ENCODE measurements at regions of chr4 and their contacts with region 1.

Region 1: GRCh38 chr4:47510506-47511143 is 25.6 kb downstream of the ATP10D start:
- DNase-seq: peak; percentile 90
- ATAC-seq: peak; percentile 94
- H3K4me3 ChIP-seq: peak overlapping the region; percentile 35; the same call in 1 of the 2 replicates
- H3K27ac ChIP-seq: peak overlapping the region; percentile 84
- H3K4me1 ChIP-seq: peaks cover 12% of the 10 kb centered on the region
- H3K27me3 ChIP-seq: no peaks in the 10 kb centered on the region
- CTCF ChIP-seq: peak in 2 of 3 experiments; percentile 2 to 42; a peak in 2 of 6 replicates
- EP300 ChIP-seq: peak; percentile 95 to 96
- POLR2A ChIP-seq: no peak
- RAD21 ChIP-seq: 0 out of 2 replicates have a peak, but pooled peaks have one; percentile 22

Region 2: GRCh38 chr4:47122592-47123291 is 387.9 kb before region 1 on chr4:
- CTCF ChIA-PET with region 1: no interaction called
- POLR2A ChIA-PET with region 1: no interaction called
- RAD21 ChIA-PET with region 1: no interaction called
- SMC1A ChIA-PET with region 1: no interaction called
- in situ Hi-C with region 1: no loop called
- intact Hi-C with region 1: no loop called
- DNase-seq: peak; percentile 21
- ATAC-seq: peak; percentile 94
- H3K4me3 ChIP-seq: no peak overlapping the region
- H3K27ac ChIP-seq: no peak overlapping the region
- H3K4me1 ChIP-seq: no peaks in the 10 kb centered on the region
- H3K27me3 ChIP-seq: no peaks in the 10 kb centered on the region
- CTCF ChIP-seq: peak; percentile 84 to 91 (median 90)
- EP300 ChIP-seq: 0 out of 4 replicates have a peak, but pooled peaks of 1 of the 2 experiments have one; percentile 24
- POLR2A ChIP-seq: no peak
- RAD21 ChIP-seq: peak; percentile 83

Region 3: DNA sequence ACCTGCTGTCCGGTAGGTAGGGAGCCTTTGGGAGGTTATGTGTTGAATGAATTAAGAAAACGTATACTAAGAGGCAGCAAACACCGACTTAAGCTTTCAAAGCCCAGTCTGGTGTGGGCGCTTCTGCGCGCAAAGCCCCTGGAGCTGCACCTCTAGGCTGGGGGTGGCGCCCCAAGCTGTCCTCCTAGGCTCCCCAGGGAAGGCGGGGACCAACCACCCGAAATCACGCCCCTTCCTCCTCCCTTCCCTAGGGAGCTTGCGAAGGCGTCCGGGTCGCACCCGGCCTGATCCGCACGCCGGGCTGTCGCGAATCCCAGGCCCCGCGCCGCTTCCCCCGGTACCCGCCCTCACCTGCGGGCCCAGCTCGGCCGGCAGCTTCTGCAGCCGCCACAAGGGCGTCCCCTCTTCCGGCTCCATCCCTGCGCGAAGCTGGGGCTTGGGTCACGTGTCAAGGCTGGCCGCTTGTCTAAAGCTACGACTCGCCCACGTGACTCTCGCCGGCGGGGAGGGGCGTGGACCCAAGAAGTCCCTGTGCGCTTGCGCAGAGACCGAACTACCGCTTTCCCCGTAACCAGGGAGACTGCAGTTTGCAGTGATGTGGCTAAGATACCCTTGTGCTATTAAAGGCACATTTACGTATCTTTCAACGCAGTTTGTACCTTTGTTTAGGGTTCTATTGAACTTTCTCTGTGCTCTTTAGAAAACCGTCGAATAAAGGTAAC is 47.2 kb before region 1 on chr4 and contains the start of gene COMMD8:
- CTCF ChIA-PET with region 1: interaction called, 9 read pairs
- POLR2A ChIA-PET with region 1: interaction called, 3 read pairs
- RAD21 ChIA-PET with region 1: interaction called, 10 read pairs
- SMC1A ChIA-PET with region 1: interaction called, 16 read pairs
- in situ Hi-C with region 1: no loop called
- intact Hi-C with region 1: no loop called
- DNase-seq: peak; percentile 91
- ATAC-seq: peak; percentile 87
- H3K4me3 ChIP-seq: peak within 1 kb of the TSS; percentile 92
- H3K27ac ChIP-seq: peak within 1 kb of the TSS; percentile 79
- H3K4me1 ChIP-seq: peaks cover 22% of the 10 kb centered on the region
- H3K27me3 ChIP-seq: no peaks in the 10 kb centered on the region
- CTCF ChIP-seq: peak; percentile 22 to 41 (median 34); a peak in 5 of 6 replicates
- EP300 ChIP-seq: peak in 1 of 2 experiments; percentile 25; a peak in 1 of 4 replicates
- POLR2A ChIP-seq: peak; percentile 96
- RAD21 ChIP-seq: peak; percentile 1; the same call in 1 of the 2 replicates
- polyA plus RNA-seq, gene COMMD8: 126 to 152 TPM

Region 4: DNA sequence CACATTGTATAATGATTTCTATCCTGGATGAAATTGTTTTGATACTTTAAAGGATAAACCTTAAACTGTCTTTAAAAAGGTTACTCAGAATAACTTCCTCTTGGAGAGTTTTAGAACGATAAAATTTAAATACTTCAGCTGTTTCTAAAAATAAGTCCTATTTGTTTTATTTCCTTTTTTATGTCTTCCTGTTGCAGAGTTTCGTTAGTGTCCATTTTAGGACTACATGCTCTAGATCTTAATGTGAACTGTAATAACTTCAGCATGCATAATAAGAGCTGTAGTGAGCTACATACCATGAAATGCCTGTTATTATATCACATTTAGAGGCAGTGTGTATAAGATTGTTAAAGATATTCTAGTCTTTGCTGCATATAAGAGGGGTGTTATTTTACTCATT is 10.9 kb before region 1 on chr4:
- CTCF ChIA-PET with region 1: interaction called, 124 read pairs
- POLR2A ChIA-PET with region 1: interaction called, 55 read pairs
- RAD21 ChIA-PET with region 1: interaction called, 99 read pairs
- SMC1A ChIA-PET with region 1: interaction called, 239 read pairs
- in situ Hi-C with region 1: no loop called
- intact Hi-C with region 1: loop called (anchors 2 kb)
- DNase-seq: no peak
- ATAC-seq: peak; percentile 61
- H3K4me3 ChIP-seq: peak overlapping the region; percentile 26; the same call in 1 of the 2 replicates
- H3K27ac ChIP-seq: peak overlapping the region; percentile 80
- H3K4me1 ChIP-seq: peaks cover 25% of the 10 kb centered on the region
- H3K27me3 ChIP-seq: no peaks in the 10 kb centered on the region
- CTCF ChIP-seq: no peak
- EP300 ChIP-seq: no peak
- POLR2A ChIP-seq: no peak
- RAD21 ChIP-seq: no peak

Region 5: DNA sequence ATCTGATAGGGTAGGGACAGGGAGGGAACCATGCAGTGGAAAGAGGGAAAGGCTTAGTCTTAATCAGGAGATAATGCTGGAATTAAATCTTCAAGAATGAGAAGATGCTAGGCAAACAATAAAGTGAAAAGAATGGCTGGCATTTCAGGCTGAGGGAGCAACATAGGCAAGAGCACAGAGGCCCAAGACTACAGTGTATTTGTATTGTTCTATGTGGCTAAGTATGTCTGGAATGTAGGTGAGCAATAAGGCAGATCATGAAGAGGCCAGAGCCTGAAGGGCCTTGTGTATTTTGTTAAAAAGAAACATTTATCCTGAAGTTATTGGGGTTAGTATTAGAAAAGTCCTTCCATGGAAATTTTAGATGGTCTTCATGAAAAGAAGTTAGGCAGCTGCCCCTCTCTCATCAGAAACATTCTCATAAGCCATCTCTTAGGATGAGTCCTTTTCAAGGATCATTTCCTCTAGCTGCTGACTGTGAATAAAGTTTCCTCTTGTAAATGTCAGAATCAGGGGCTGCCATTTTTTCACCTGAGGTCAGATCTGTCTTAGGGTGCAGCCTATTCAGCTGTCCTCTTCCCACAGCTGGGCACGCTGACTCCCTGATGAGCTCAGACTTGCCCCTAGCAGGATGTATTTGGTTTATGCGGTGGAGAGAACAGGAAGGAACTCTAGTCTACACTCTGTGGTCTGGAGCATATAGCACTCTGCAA is 20.8 kb after region 1 on chr4:
- CTCF ChIA-PET with region 1: interaction called, 23 read pairs
- POLR2A ChIA-PET with region 1: interaction called, 4 read pairs
- RAD21 ChIA-PET with region 1: interaction called, 6 read pairs
- SMC1A ChIA-PET with region 1: interaction called, 42 read pairs
- in situ Hi-C with region 1: no loop called
- intact Hi-C with region 1: loop called (anchors 2 kb)
- DNase-seq: peak; percentile 86
- ATAC-seq: peak; percentile 95
- H3K4me3 ChIP-seq: no peak overlapping the region
- H3K27ac ChIP-seq: peak overlapping the region; percentile 43
- H3K4me1 ChIP-seq: peaks cover 13% of the 10 kb centered on the region
- H3K27me3 ChIP-seq: no peaks in the 10 kb centered on the region
- CTCF ChIP-seq: no peak
- EP300 ChIP-seq: peak; percentile 51 to 54; a peak in 2 of 4 replicates
- POLR2A ChIP-seq: no peak
- RAD21 ChIP-seq: no peak

Region 6: DNA sequence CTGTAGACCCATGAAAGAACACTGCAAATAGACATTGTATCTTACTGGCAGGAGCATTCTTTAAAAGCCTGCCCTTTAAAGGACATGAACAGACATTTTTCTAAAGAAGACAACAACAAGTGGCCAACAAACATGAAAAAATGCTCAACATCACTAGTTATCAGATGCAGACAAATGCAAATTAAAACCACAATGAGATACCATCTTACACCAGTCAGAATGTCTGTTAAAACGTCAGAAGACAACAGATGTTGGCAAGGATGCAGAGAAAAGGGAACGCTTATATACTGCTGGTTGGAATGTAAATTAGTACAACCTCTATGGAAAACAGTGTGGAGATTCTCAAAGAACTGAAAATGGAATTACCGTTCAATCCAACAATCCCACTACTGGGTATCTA is 51.7 kb after region 1 on chr4:
- CTCF ChIA-PET with region 1: interaction called, 26 read pairs
- POLR2A ChIA-PET with region 1: no interaction called
- RAD21 ChIA-PET with region 1: interaction called, 4 read pairs
- SMC1A ChIA-PET with region 1: interaction called, 8 read pairs
- in situ Hi-C with region 1: no loop called
- intact Hi-C with region 1: loop called (anchors 1 kb)
- DNase-seq: no peak
- ATAC-seq: no peak
- H3K4me3 ChIP-seq: no peak overlapping the region
- H3K27ac ChIP-seq: no peak overlapping the region
- H3K4me1 ChIP-seq: peaks cover 5% of the 10 kb centered on the region; the same call in 1 of the 2 replicates
- H3K27me3 ChIP-seq: no peaks in the 10 kb centered on the region; a peak in 1 of 4 replicates
- CTCF ChIP-seq: no peak
- EP300 ChIP-seq: no peak
- POLR2A ChIP-seq: no peak
- RAD21 ChIP-seq: no peak

Region 7: GRCh38 chr4:47567511-47567910 is 56.9 kb after region 1 on chr4:
- CTCF ChIA-PET with region 1: interaction called, 26 read pairs
- POLR2A ChIA-PET with region 1: no interaction called
- RAD21 ChIA-PET with region 1: interaction called, 4 read pairs
- SMC1A ChIA-PET with region 1: interaction called, 8 read pairs
- in situ Hi-C with region 1: no loop called
- intact Hi-C with region 1: loop called (anchors 1 kb)
- DNase-seq: no peak
- ATAC-seq: no peak
- H3K4me3 ChIP-seq: no peak overlapping the region
- H3K27ac ChIP-seq: no peak overlapping the region
- H3K4me1 ChIP-seq: peaks cover 5% of the 10 kb centered on the region; the same call in 1 of the 2 replicates
- H3K27me3 ChIP-seq: no peaks in the 10 kb centered on the region; a peak in 1 of 4 replicates
- CTCF ChIP-seq: no peak
- EP300 ChIP-seq: no peak
- POLR2A ChIP-seq: no peak
- RAD21 ChIP-seq: no peak

Region 8: DNA sequence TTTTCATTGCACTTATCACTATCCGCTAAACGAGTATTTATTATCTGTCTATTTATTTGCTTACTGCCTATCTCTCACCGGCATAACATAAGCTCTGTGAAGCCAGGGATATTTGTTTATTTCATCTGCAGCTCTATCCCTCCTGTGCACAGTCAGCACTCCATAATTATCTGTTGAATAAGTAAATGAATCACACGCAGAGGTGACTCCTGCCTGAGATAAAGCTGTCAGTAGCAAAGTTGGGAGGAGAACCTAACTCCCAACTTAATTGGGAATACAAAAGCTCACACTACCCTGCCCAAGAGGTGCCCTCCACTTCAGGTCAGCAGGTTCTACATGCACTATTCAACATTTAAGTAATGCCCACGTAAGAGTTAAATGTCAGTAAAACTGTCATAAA is 241.6 kb after region 1 on chr4:
- CTCF ChIA-PET with region 1: no interaction called
- POLR2A ChIA-PET with region 1: no interaction called
- RAD21 ChIA-PET with region 1: no interaction called
- SMC1A ChIA-PET with region 1: no interaction called
- in situ Hi-C with region 1: no loop called
- intact Hi-C with region 1: no loop called
- DNase-seq: no peak
- ATAC-seq: no peak
- H3K4me3 ChIP-seq: no peak overlapping the region
- H3K27ac ChIP-seq: no peak overlapping the region
- H3K4me1 ChIP-seq: no peaks in the 10 kb centered on the region
- H3K27me3 ChIP-seq: no peaks in the 10 kb centered on the region; a peak in 1 of 4 replicates
- CTCF ChIP-seq: no peak
- EP300 ChIP-seq: no peak
- POLR2A ChIP-seq: no peak
- RAD21 ChIP-seq: no peak

Region 9: DNA sequence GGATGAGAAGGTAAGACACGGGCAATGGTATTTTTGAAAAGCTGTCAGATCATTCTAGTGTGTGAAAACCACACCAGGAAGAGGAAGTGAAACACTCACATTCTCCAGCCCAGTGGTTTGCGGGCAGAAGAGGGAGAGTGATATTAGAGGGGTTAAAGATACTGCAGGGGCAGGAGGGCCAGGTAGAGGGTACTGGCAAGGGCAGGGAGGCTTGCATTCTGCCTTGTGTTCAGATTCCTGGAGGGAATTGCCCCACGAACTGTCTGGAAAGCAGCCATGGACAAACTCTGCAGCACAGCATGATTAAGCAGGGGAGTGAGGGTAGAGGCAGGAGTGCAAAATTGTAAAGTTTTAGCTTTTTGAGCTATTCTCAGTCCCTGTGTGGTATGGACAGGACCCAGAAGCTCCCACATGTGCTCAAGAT is 536.8 kb after region 1 on chr4:
- CTCF ChIA-PET with region 1: no interaction called
- POLR2A ChIA-PET with region 1: no interaction called
- RAD21 ChIA-PET with region 1: no interaction called
- SMC1A ChIA-PET with region 1: no interaction called
- in situ Hi-C with region 1: no loop called
- intact Hi-C with region 1: loop called (anchors 10 kb)
- DNase-seq: peak; percentile 84
- ATAC-seq: peak; percentile 95
- H3K4me3 ChIP-seq: peak overlapping the region; percentile 18; the same call in 1 of the 2 replicates
- H3K27ac ChIP-seq: peak overlapping the region; percentile 71
- H3K4me1 ChIP-seq: peaks cover 72% of the 10 kb centered on the region
- H3K27me3 ChIP-seq: no peaks in the 10 kb centered on the region; a peak in 1 of 4 replicates
- CTCF ChIP-seq: no peak
- EP300 ChIP-seq: peak; percentile 94 to 98
- POLR2A ChIP-seq: no peak
- RAD21 ChIP-seq: peak; percentile 36; the same call in 1 of the 2 replicates

Measured in GM12878 (cell line).